HEK293 (cell line): ENCODE measurements at regions of chr11 and their contacts with region 1.

Region 1: DNA sequence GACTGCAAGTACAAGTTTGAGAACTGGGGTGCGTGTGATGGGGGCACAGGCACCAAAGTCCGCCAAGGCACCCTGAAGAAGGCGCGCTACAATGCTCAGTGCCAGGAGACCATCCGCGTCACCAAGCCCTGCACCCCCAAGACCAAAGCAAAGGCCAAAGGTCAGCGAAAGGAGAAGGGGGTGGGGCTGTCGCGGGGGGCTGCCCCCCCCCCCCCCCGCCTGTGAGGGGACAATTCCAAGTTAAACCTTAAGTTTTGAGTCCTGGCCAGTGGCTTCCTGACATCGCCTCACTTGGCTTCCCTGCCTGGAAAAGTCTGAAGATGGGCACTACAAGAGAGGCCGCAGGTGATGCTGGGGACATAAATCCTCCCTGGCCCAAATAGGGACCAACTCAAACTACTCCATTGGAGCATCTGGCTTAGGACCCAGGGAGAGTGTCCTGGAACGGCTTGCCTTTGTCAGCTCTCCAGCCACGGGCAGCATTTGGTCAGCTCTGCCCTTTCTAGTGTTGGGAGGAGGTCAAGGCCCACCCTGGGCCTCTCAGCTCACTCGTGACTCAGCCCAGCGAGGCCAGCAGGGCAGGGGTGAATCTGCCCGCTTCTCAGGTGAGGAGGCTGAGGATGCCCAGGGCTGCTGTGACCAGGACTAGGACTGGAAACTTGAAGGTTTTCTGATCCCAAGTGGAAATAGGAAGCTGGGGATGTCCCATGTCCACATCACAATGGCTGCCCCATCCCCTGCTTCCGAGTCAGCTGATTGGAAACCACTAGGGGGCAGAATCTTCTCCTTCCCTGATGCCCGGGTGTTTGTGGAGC is 1.3 kb downstream of the MDK start:
- H3K4me3 ChIP-seq: no peak overlapping the region
- H3K27ac ChIP-seq: no peak overlapping the region; the same call in 1 of the 2 replicates
- H3K4me1 ChIP-seq: no peaks in the 10 kb centered on the region
- CTCF ChIP-seq: peak; percentile 56

Region 2: DNA sequence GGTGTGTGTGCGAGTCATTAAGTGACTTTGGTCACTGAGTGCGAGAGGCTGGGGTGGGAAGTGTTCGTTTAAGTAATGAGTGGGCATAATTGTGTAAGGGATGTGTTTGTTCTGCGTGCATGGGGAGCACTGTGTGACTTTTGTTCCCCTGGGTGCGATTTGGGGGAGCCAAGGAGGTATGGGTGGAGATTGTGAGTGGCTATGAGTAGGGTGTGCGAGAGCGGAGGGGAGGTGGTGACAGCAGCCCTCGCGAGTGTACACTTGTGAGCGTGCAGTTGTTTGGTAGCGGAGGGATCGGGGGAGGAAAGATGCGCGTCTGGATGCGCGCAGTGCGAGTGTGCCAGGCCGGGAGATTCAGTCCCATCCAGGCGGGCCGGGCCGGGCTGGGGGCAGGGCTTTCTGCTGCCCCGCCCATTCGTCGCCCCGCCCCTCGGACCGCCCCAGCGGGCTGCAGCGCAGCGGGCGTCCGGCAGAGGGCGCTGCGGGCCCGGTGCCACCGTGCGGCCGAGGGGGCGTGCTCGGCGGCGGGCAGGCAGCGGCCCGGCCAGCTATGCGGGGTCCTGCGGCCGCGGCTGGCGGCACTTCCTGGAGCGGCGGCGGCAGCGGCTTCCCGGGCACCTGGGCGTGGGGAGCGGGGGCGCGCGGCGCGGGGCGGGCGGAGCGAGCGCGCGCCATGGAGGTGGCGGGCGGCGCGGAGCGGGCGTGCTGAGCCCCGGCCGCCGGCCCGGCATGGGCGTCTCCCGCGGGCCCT is 35.7 kb before region 1 on chr11 and contains the start of gene DGKZ:
- CTCF ChIA-PET with region 1: interaction called, 11 read pairs
- POLR2A ChIA-PET with region 1: no interaction called
- H3K4me3 ChIP-seq: peak within 1 kb of the TSS; percentile 85
- H3K27ac ChIP-seq: peak within 1 kb of the TSS; percentile 64; the same call in 1 of the 2 replicates
- H3K4me1 ChIP-seq: no peaks in the 10 kb centered on the region; the same call in 1 of the 2 replicates
- CTCF ChIP-seq: no peak; the same call in 1 of the 2 replicates

Region 3: GRCh38 chr11:46367244-46367915 is 15.4 kb before region 1 on chr11:
- CTCF ChIA-PET with region 1: interaction called, 18 read pairs
- POLR2A ChIA-PET with region 1: no interaction called
- H3K4me3 ChIP-seq: no peak overlapping the region
- H3K27ac ChIP-seq: no peak overlapping the region
- H3K4me1 ChIP-seq: no peaks in the 10 kb centered on the region
- CTCF ChIP-seq: peak; percentile 67

Region 4: DNA sequence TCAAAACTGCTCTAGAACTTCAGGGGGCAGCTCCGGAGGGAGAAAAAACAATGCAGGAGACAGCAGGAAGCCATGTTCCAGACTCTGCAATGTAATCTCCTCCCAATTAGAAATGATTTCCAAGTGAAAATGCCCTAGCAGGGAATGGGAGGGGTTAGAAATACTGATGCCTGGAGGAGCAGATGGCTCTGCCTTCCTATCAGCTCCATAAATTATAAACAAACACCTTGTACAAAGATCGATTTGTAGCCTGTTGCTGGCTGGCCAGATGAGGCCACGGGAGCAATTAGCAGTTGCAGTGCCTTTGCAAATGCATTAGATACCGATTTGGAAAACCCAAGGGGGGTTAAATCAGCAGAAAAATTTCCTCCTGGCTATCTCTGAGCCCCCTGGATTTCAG is 55.4 kb after region 1 on chr11:
- CTCF ChIA-PET with region 1: no interaction called
- POLR2A ChIA-PET with region 1: no interaction called
- H3K4me3 ChIP-seq: no peak overlapping the region
- H3K27ac ChIP-seq: no peak overlapping the region
- H3K4me1 ChIP-seq: no peaks in the 10 kb centered on the region
- CTCF ChIP-seq: no peak

Region 5: GRCh38 chr11:46529095-46529905 is 146.5 kb after region 1 on chr11:
- CTCF ChIA-PET with region 1: interaction called, 56 read pairs
- POLR2A ChIA-PET with region 1: no interaction called
- H3K4me3 ChIP-seq: no peak overlapping the region
- H3K27ac ChIP-seq: no peak overlapping the region
- H3K4me1 ChIP-seq: no peaks in the 10 kb centered on the region
- CTCF ChIP-seq: peak; percentile 56; the same call in 1 of the 2 replicates